ENCODE measurements at regions of chr1 and their contacts with region 1.

Region 1: DNA sequence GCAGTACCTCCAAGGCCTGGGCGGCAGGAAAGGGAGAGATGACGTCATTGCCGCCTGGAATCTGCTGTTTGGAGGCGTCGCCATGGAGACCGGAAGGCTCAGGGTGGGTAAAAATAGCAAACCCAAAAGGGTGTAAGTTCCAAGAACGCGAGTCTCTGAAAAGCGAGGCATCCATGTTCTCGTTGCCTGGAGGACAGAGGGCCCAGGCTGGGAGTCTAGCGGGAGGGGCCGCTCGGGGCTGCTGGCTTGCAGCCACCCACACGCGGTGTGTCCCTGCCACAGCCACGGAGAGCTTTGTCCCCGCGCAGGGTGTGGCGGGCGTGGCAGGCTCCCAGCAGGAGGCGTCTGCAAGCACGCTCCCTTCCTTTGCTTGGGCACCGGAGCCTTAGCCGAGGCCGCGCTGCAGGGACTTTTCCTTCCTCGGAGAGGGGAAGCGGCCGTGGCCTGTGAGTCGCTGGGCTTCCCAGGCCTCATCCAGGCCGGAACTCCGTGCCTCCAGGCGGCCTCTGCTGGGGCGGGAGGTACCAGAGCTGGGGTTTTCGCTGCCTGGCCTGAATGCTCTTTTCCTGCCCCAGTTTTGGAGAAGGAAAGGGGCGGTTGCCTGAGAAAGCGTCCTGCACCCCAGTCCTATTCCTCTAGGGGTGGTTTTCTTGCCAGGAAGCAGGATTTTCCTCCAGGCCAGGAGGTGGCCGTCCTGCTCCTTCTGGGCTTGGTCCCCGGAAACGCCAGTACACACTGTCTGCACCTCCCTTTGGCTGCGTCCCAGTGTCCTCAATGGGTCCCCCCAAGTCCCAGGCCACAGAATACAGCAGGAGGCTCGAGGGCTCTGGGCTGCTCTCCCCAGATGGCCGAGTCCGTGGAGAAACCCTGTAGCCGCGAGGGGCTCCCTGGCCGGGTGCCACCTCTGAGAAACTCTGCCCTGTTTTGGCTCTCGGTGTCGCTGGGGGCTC is 15.3 kb upstream of the SKI start:
- DNase-seq: peak; percentile 93
- ATAC-seq: peak; percentile 62

Region 2: GRCh38 chr1:2227346-2228153 is 14.7 kb after region 1 on chr1:
- intact Hi-C with region 1: loop called (anchors 1 kb)
- DNase-seq: peak; percentile 97
- ATAC-seq: peak; percentile 94

Region 3: DNA sequence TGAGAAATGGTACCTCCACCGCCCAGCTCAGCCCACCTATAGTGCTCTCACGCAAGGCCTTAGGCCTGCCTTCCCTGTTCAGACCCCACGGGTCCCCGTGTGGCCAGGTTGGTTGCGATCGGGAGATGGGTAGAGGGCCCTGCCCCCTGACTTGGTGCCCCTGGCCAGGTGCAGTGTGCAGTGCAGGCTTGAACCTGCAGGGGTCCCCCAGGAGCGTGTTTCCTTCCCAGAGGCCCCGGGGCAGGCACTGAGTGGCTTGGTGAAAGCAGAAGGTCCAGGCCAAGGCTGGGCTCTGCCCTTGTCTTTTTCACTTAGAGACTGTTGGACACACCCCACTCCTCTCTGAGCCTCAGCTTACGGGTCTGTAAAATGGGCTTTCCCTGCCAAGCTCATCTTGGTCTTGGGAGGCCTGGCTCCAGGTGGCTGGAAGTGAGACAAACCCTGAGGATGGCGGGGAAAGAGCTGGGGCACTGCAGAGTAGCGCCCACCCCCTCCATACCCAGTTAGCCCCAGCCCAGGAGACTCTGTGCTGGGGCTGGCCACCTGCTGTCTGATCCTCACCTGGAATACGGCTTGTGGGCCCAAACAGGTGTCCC is 326.6 kb after region 1 on chr1:
- intact Hi-C with region 1: no loop called
- DNase-seq: no peak
- ATAC-seq: no peak